Ovary (tissue), 10 donors: ENCODE measurements at regions of chr1 and their contacts with region 1.

Region 1: GRCh38 chr1:177464686-177465085 is 293.9 kb downstream of the BRINP2 start:
- DNase-seq: no peak
- H3K4me3 ChIP-seq: no peak overlapping the region
- H3K27ac ChIP-seq: no peak overlapping the region
- H3K4me1 ChIP-seq: no peaks in the 10 kb centered on the region
- H3K27me3 ChIP-seq: no peaks in the 10 kb centered on the region
- CTCF ChIP-seq: no peak
- EP300 ChIP-seq: no peak
- POLR2A ChIP-seq: no peak

Region 2: DNA sequence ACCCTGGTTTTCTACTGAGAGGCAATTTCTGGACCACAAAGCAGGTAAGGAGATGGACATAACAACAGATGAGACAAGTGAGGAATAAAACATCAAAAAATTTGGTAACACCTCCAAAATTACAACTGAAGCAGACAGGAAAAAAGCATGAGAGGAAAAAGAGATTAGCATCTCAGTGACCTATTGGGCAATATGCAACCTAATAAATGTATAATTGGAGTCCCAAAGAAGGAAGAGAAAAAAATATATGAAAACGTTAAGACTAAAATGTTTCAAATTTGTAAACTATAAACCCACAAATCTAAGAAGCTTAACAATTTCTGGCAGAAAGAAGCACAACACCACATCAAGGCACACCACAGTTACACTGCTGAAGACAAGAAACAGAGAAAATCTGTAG is 1513.1 kb before region 1 on chr1:
- intact Hi-C with region 1: loop called in 1 of 4 experiments (anchors 5 kb)
- DNase-seq: no peak
- H3K4me3 ChIP-seq: no peak overlapping the region
- H3K27ac ChIP-seq: no peak overlapping the region
- H3K4me1 ChIP-seq: no peaks in the 10 kb centered on the region
- H3K27me3 ChIP-seq: no peaks in the 10 kb centered on the region
- CTCF ChIP-seq: no peak
- EP300 ChIP-seq: no peak
- POLR2A ChIP-seq: no peak

Region 3: GRCh38 chr1:177495890-177496289 is 31.2 kb after region 1 on chr1:
- intact Hi-C with region 1: no loop called
- DNase-seq: no peak
- H3K4me3 ChIP-seq: no peak overlapping the region
- H3K27ac ChIP-seq: no peak overlapping the region
- H3K4me1 ChIP-seq: no peaks in the 10 kb centered on the region
- H3K27me3 ChIP-seq: no peaks in the 10 kb centered on the region
- CTCF ChIP-seq: no peak
- EP300 ChIP-seq: no peak
- POLR2A ChIP-seq: no peak